Left lung (tissue), 14 donors: ENCODE measurements at regions of chr15 and their contacts with region 1.

Region 1: DNA sequence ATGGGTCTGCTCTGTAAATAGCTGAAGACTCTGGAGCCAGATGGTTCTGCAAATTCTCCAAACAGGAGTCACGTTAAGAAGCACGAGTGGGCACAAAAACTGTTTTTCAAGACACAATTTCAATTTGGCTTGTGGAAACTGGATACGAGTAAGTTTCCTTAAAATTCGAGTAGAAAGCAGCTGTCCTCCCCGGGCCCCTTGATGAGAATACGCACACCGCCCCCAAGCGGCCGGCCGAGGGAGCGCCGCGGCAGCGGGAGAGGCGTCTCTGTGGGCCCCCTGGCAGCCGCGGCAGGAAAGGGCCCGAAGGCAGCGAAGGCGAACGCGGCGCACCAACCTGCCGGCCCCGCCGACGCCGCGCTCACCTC is 778 bp upstream of the THBS1 start:
- DNase-seq: peak; percentile 90 to 98 (median 93)
- ATAC-seq: peak; percentile 91
- H3K4me3 ChIP-seq: peak overlapping the region; percentile 47 to 54
- H3K27ac ChIP-seq: peak overlapping the region; percentile 67 to 91
- H3K4me1 ChIP-seq: peaks cover 3 to 45% of the 10 kb centered on the region in 2 donors
- H3K27me3 ChIP-seq: peaks cover 0 to 59% of the 10 kb centered on the region in 2 donors
- CTCF ChIP-seq: peak; percentile 93 to 99

Region 2: GRCh38 chr15:39171944-39172368 is 408.1 kb before region 1 on chr15:
- intact Hi-C with region 1: loop called in 1 of 2 experiments (anchors 10 kb)
- DNase-seq: peak in 3 of 4 donors; percentile 53 to 83 (median 60)
- ATAC-seq: peak; percentile 98
- H3K4me3 ChIP-seq: no peak overlapping the region
- H3K27ac ChIP-seq: peak overlapping the region in 1 of 2 donors; percentile 13
- H3K4me1 ChIP-seq: peaks cover 4 to 17% of the 10 kb centered on the region in 2 donors
- H3K27me3 ChIP-seq: no peaks in the 10 kb centered on the region
- CTCF ChIP-seq: peak; percentile 35 to 37

Region 3: DNA sequence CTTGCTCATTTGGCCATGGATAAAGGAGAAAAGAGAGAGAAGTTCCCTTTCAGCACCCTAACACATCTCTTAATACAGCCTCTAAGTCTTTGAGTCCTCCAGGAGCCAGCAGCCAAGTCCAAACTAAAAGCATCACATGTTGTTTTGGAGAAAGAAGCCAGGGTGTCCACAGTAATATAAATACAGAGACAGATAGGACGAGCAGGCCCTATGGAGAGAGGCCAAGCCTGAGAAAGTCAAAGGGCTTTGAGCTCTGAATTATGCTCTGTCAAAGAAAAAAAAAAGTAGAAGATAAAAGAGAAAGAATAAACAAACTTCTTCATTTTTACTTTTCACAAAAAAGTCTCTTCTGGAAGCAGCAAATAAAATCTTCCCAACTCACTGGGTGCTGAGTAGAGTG is 91.6 kb before region 1 on chr15:
- intact Hi-C with region 1: no loop called
- DNase-seq: peak in 1 of 4 donors; percentile 75
- ATAC-seq: peak; percentile 62
- H3K4me3 ChIP-seq: no peak overlapping the region
- H3K27ac ChIP-seq: no peak overlapping the region
- H3K4me1 ChIP-seq: peaks cover 0 to 4% of the 10 kb centered on the region in 2 donors
- H3K27me3 ChIP-seq: no peaks in the 10 kb centered on the region
- CTCF ChIP-seq: no peak

Region 4: DNA sequence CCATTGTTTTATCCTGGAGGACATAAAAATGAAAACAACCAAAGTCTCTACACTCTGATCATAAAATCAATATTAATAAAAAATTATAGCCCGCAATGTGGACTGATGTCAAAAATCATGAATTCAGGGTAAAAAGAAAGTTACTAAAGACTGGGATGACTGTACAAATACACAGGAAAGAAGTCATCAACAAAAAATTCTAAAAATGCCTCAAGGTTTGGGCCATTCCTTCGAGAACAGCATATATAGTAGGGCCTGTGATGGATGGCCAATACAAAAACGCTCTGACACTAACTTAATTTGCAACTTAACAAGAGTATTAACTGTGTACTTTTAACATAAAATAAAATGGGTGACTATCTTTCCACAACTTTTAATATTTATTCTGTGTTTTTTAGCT is 77.6 kb after region 1 on chr15:
- intact Hi-C with region 1: no loop called
- DNase-seq: no peak
- ATAC-seq: no peak
- H3K4me3 ChIP-seq: no peak overlapping the region
- H3K27ac ChIP-seq: no peak overlapping the region
- H3K4me1 ChIP-seq: no peaks in the 10 kb centered on the region
- H3K27me3 ChIP-seq: no peaks in the 10 kb centered on the region
- CTCF ChIP-seq: no peak

Region 5: DNA sequence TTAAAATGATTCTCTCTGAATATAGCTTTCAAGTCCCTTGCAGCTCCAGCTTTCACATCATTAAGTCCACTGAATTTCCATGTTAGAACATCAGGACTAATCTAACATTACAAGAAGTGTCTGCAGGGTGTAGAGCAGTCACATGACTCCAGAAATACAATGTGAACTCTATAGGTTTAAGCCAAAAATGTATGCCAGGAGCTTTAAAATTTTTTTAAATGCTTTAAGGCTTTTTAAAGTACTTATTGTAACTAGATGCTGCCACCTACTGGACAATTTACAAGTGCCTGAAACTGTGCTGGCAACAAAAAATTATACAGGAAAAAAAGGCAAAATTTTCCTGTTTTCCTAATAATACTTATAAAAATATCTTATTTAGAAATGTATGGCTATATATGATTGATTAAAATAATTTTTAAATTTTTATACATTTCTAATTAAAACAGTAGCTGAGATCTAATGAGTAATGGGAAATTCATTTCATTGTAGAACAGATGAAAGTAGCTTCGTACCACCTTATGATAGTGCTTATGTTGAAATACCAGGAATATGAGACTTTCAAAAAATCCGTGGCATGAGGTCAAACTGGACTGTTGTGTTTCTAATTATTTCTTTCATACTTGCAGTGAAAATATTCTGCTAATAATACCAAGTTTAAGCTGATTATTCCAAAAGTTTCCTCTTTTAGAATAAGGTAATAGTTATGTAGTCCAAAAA is 176.9 kb after region 1 on chr15:
- intact Hi-C with region 1: loop called in 1 of 2 experiments (anchors 10 kb)
- DNase-seq: peak in 2 of 4 donors; percentile 68 to 74
- ATAC-seq: peak; percentile 42
- H3K4me3 ChIP-seq: no peak overlapping the region
- H3K27ac ChIP-seq: no peak overlapping the region
- H3K4me1 ChIP-seq: no peaks in the 10 kb centered on the region
- H3K27me3 ChIP-seq: no peaks in the 10 kb centered on the region
- CTCF ChIP-seq: peak; percentile 72 to 77